Mammary epithelial cell (primary cell): ENCODE measurements at regions of chr2 and their contacts with region 1.

Region 1: DNA sequence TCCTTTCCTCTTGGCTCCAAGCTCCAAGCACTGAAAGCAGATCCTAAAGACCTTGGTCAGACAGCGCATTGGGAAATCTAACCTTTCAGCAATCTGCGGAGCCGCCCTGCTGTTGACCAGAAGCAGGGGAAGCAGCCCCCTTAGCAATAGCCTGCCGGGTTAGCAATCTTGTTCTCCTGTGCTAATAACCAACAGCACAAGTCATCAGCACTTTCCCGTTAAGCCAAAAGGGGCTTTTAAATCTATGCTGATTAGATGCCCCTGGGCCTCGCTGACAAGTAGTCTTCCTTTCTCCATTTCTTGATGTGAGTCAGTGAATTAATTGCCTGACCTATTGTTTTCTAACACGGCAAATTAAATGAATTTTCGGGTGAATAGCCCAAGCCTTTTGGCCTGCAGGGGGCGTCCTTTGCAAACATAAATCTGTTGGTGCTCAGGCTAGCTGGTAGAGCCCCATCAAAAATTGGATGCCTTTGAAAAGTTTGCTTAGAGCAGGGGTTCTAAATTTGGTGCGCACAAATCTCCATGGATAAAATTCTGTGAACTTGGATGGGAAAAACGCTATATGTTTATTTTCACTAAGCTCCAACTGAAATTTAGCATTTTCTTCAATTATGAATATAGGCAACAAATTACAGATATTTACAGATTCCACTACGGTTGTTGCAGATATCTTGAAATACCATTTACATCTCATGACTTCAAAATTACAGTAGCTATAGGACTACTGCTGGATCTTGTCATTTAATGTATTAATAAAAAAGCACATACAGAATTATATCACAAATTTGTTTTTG is 24.6 kb downstream of the MAIP1 start:
- DNase-seq: peak; percentile 72
- H3K4me3 ChIP-seq: no peak overlapping the region
- H3K27ac ChIP-seq: no peak overlapping the region
- H3K4me1 ChIP-seq: peaks cover 31% of the 10 kb centered on the region
- H3K27me3 ChIP-seq: no peaks in the 10 kb centered on the region
- CTCF ChIP-seq: peak; percentile 78 to 82

Region 2: GRCh38 chr2:200471324-200471848 is 491.4 kb after region 1 on chr2:
- CTCF ChIA-PET with region 1: interaction called, 7 read pairs
- dilution Hi-C with region 1: no loop called
- in situ Hi-C with region 1: loop called in 1 of 2 experiments (anchors 5 kb)
- intact Hi-C with region 1: loop called (anchors 1 kb)
- DNase-seq: peak; percentile 11
- H3K4me3 ChIP-seq: no peak overlapping the region
- H3K27ac ChIP-seq: no peak overlapping the region
- H3K4me1 ChIP-seq: no peaks in the 10 kb centered on the region
- H3K27me3 ChIP-seq: no peaks in the 10 kb centered on the region
- CTCF ChIP-seq: peak; percentile 35 to 60

Region 3: DNA sequence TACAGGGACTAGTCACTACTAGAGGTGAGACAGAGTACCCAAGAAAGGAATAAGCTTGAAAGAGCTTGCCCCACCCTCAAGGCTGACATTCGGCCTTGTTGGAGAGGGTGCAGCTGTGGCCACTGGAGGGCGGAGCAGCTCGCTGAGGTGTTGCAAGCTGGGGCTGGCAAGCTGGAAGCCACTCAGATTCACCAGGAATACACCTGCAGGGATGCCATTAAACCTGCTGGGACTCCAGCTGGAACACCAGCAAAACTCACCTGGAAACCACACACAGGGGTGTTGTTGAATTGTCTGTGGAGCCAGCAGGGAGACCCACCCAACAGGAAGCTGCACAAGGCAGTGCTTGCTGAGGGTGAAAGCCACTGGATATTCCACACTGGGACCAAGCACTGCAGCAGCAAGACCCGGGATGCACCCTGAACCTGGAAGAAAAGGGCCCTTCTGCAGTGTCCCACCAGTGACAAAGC is 503.7 kb after region 1 on chr2:
- CTCF ChIA-PET with region 1: interaction called, 26 read pairs
- dilution Hi-C with region 1: no loop called
- in situ Hi-C with region 1: loop called in 1 of 2 experiments (anchors 5 kb)
- intact Hi-C with region 1: loop called (anchors 1 kb)
- DNase-seq: peak; percentile 62
- H3K4me3 ChIP-seq: no peak overlapping the region
- H3K27ac ChIP-seq: no peak overlapping the region
- H3K4me1 ChIP-seq: peaks cover 27% of the 10 kb centered on the region
- H3K27me3 ChIP-seq: no peaks in the 10 kb centered on the region
- CTCF ChIP-seq: peak; percentile 59 to 81